ENCODE measurements at regions of chr7 and their contacts with region 1.

Region 1: DNA sequence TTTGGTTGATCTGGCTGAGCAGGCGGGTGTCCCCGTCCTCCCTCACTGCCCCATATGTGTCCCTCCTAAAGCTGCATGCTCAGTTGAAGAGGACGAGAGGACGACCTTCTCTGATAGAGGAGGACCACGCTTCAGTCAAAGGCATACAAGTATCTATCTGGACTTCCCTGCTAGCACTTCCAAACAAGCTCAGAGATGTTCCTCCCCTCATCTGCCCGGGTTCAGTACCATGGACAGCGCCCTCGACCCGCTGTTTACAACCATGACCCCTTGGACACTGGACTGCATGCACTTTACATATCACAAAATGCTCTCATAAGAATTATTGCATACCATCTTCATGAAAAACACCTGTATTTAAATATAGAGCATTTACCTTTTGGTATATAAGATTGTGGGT is 26.9 kb upstream of the TRIM56 start:
- DNase-seq: peak; percentile 14 to 68 (median 35)
- ATAC-seq: no peak
- H3K4me3 ChIP-seq: no peak overlapping the region
- H3K4me3 Mint-ChIP-seq: no peak overlapping the region
- H3K27ac ChIP-seq: no peak overlapping the region
- H3K27ac Mint-ChIP-seq: no peak overlapping the region
- H3K4me1 ChIP-seq: peaks cover 3% of the 10 kb centered on the region
- H3K4me1 Mint-ChIP-seq: peaks cover 4% of the 10 kb centered on the region
- H3K27me3 ChIP-seq: peaks cover 29 to 31% of the 10 kb centered on the region in 2 experiments
- H3K27me3 Mint-ChIP-seq: peaks cover 69% of the 10 kb centered on the region
- CTCF ChIP-seq: no peak

Region 2: GRCh38 chr7:100469227-100470044 is 588.9 kb before region 1 on chr7:
- CTCF ChIA-PET with region 1: no interaction called
- POLR2A ChIA-PET with region 1: no interaction called
- intact Hi-C with region 1: loop called in 1 of 2 experiments (anchors 10 kb)
- DNase-seq: peak; percentile 70 to 92 (median 82)
- ATAC-seq: peak; percentile 97
- H3K4me3 ChIP-seq: no peak overlapping the region
- H3K4me3 Mint-ChIP-seq: no peak overlapping the region
- H3K27ac ChIP-seq: no peak overlapping the region
- H3K27ac Mint-ChIP-seq: no peak overlapping the region
- H3K4me1 ChIP-seq: peaks cover 38% of the 10 kb centered on the region
- H3K4me1 Mint-ChIP-seq: peaks cover 32% of the 10 kb centered on the region
- H3K27me3 ChIP-seq: no peaks in the 10 kb centered on the region
- H3K27me3 Mint-ChIP-seq: no peaks in the 10 kb centered on the region
- CTCF ChIP-seq: peak; percentile 90

Region 3: GRCh38 chr7:100803398-100804233 is 254.7 kb before region 1 on chr7:
- CTCF ChIA-PET with region 1: no interaction called
- POLR2A ChIA-PET with region 1: no interaction called
- intact Hi-C with region 1: loop called (anchors 2 to 5 kb)
- DNase-seq: peak in 5 of 14 experiments; percentile 15 to 65 (median 57)
- ATAC-seq: no peak
- H3K4me3 ChIP-seq: no peak overlapping the region
- H3K4me3 Mint-ChIP-seq: no peak overlapping the region
- H3K27ac ChIP-seq: no peak overlapping the region
- H3K27ac Mint-ChIP-seq: no peak overlapping the region
- H3K4me1 ChIP-seq: peaks cover 4% of the 10 kb centered on the region
- H3K4me1 Mint-ChIP-seq: no peaks in the 10 kb centered on the region
- H3K27me3 ChIP-seq: peaks cover 0 to 8% of the 10 kb centered on the region in 2 experiments
- H3K27me3 Mint-ChIP-seq: no peaks in the 10 kb centered on the region
- CTCF ChIP-seq: no peak

Region 4: GRCh38 chr7:100896732-100897608 is 161.4 kb before region 1 on chr7:
- CTCF ChIA-PET with region 1: interaction called, 10 read pairs
- POLR2A ChIA-PET with region 1: no interaction called
- intact Hi-C with region 1: loop called (anchors 1 kb)
- DNase-seq: peak in 10 of 14 experiments; percentile 48 to 80 (median 62)
- ATAC-seq: peak; percentile 66
- H3K4me3 ChIP-seq: peak overlapping the region; percentile 34
- H3K4me3 Mint-ChIP-seq: peak overlapping the region; percentile 68
- H3K27ac ChIP-seq: no peak overlapping the region
- H3K27ac Mint-ChIP-seq: no peak overlapping the region
- H3K4me1 ChIP-seq: peaks cover 25% of the 10 kb centered on the region
- H3K4me1 Mint-ChIP-seq: peaks cover 8% of the 10 kb centered on the region
- H3K27me3 ChIP-seq: peaks cover 36 to 60% of the 10 kb centered on the region in 2 experiments
- H3K27me3 Mint-ChIP-seq: peaks cover 54% of the 10 kb centered on the region
- CTCF ChIP-seq: peak; percentile 70

Region 5: DNA sequence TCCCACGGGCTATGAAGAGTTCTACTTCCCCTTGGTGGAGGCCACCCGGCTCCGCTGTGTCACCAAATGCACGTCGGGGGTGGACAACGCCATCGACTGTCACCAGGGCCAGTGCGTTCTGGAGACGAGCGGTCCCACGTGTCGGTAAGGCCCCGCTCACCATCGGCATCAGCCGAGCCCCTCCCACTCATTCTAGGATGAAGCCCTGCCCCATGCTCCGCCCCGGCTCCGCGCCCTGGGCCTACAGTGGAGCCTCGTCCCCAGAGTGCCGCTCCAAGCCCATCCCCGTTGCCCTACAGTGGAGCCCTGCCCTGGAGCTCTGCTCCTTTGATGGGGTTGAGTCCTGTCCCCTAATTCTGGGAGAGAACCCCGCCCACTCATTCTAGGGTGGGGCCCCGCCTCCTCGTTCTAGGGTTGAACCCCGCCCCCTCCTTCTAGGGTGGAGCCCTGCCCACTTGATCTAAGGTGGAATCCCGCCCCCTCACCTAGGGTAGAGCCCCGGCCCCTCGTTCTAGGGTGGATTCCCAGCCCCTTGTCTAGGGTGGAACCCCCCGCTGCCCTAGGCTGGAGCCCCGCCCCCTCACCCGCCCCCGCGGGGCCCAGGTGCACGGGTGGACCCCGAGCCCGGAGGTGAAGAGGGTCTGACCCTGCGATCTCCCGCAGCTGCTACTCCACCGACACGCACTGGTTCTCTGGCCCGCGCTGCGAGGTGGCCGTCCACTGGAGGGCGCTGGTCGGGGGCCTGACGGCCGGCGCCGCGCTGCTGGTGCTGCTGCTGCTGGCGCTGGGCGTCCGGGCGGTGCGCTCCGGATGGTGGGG is 92.4 kb before region 1 on chr7:
- CTCF ChIA-PET with region 1: no interaction called
- POLR2A ChIA-PET with region 1: no interaction called
- intact Hi-C with region 1: loop called (anchors 1 kb)
- DNase-seq: peak; percentile 49 to 81 (median 63)
- ATAC-seq: peak; percentile 82
- H3K4me3 ChIP-seq: peak overlapping the region; percentile 49
- H3K4me3 Mint-ChIP-seq: peak overlapping the region; percentile 84
- H3K27ac ChIP-seq: no peak overlapping the region
- H3K27ac Mint-ChIP-seq: no peak overlapping the region
- H3K4me1 ChIP-seq: peaks cover 28% of the 10 kb centered on the region
- H3K4me1 Mint-ChIP-seq: peaks cover 22% of the 10 kb centered on the region
- H3K27me3 ChIP-seq: peaks cover 52 to 62% of the 10 kb centered on the region in 2 experiments
- H3K27me3 Mint-ChIP-seq: peaks cover 68% of the 10 kb centered on the region
- CTCF ChIP-seq: peak; percentile 37

Region 6: DNA sequence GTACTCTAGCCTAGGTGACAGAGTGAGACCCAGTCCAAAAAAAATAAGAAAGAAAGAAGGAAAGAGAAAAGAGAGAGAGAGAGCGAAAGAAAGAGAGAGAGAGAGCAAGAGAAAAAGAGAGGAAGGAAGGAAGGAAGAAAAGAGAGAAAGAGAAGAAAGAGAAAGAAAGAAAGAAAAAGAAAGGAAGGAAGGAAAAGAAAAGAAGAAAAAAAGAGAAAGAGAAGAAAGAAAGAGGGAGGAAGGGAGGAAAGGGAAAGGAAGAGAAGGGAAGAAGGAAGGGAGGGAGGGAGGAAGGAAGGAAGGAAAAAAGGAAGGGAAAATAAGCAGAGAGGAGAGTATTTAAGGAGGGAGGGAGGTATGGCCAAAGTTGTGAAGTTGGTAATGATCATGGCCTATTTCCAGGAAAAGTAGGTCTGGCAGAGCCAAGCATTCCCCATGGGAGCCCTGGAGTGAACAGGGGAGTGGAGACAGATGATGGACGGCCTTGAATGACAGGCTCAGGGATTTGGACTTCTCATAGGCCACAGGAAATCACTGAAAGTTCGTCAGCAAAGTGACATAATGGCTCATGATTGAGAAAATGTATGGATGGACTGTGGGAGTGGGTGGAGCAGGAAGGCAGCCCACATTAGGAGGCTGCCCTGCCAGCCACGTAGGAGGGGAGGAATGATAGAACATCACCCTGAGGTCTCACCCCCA is 714.3 kb after region 1 on chr7:
- CTCF ChIA-PET with region 1: no interaction called
- POLR2A ChIA-PET with region 1: no interaction called
- intact Hi-C with region 1: no loop called
- DNase-seq: no peak
- ATAC-seq: no peak
- H3K4me3 ChIP-seq: no peak overlapping the region
- H3K4me3 Mint-ChIP-seq: no peak overlapping the region
- H3K27ac ChIP-seq: no peak overlapping the region
- H3K27ac Mint-ChIP-seq: no peak overlapping the region
- H3K4me1 ChIP-seq: no peaks in the 10 kb centered on the region
- H3K4me1 Mint-ChIP-seq: no peaks in the 10 kb centered on the region
- H3K27me3 ChIP-seq: peaks cover 0 to 3% of the 10 kb centered on the region in 2 experiments
- H3K27me3 Mint-ChIP-seq: peaks cover 8% of the 10 kb centered on the region
- CTCF ChIP-seq: no peak

Measured in CD4-positive, alpha-beta T cell (primary cell).